Mammary epithelial cell (primary cell): ENCODE measurements at regions of chr2 and their contacts with region 1.

Region 1: DNA sequence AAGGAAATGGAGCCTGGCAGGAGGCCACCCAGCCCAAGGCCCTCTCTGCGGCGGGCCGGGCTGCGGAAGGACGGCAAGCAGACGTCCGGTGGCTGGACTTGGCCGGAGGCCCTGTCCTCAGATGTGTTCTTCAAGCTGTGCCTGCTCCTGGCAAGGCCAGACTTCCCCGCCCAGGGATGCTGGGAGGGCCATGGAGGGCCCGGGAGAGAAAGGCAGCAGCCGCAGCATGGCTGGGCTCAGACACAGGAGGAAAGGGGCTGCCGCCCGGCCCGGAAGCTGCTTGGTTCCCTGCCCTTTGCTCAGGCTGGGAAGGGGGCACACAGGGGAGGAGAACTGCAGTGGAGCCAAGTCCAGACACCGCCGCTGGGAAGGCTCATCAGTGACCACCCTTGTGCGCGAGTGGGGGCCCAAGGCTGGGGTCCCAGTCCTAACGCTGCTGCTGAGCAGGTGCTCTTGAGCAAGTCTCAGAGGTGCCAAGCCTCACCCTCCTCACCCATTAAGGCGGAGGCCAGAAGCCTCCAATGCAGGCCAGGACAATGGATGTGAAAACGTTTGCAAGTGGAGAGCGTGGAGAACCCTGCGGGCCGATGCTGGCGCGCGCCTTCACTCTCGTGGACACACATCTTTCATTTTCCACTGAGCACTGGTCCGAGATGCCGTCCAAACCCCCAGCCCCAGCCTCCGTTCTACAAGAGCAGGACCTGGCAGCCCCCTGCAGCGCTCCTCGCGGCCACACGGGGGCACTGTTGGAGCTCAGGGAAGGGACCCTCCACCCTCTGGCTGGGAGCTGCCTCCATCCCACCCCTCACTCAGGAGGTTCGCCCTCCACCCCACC is 7.9 kb downstream of the CROCC2 start:
- DNase-seq: no peak
- H3K4me3 ChIP-seq: no peak overlapping the region
- H3K27ac ChIP-seq: no peak overlapping the region
- H3K4me1 ChIP-seq: peaks cover 27% of the 10 kb centered on the region
- H3K27me3 ChIP-seq: peaks cover 7% of the 10 kb centered on the region
- CTCF ChIP-seq: peak; percentile 65 to 91

Region 2: DNA sequence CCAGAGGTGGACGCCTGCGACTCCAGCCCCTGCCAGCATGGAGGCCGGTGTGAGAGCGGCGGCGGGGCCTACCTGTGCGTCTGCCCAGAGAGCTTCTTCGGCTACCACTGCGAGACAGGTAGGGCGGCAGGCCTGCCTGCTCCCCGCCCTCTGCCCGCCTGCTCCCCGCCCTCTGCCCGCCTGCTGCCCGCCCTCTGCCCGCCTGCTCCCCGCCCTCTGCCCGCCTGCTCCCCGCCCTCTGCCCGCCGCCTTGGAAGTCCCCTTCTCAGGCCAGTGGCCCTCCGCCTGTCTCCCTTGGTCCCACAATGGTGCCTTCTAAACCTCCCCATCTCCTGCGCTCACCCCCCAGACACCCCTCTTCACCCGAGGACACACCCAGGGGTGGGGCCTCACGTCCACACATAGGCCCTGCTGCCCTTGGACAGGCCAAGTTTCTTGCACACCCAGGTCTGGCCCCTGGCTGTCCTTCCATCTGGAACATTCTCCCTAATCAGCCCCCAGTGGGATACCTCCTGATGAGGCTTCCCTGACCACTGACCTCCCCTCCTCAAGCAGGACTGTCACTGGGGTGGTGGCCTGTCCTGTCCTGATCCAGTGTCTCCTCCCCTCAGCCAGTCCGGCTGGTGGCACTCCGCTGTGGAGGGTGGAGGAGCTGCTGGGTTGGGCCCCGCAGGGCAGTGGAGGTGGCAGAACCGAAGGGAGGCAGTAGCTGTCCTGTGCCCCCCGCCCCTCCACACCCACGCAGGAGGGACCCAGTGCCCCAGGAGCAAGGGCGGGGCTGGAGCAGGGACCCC is 150.2 kb after region 1 on chr2:
- CTCF ChIA-PET with region 1: no interaction called
- dilution Hi-C with region 1: no loop called
- in situ Hi-C with region 1: no loop called
- intact Hi-C with region 1: loop called (anchors 5 kb)
- DNase-seq: peak; percentile 56
- H3K4me3 ChIP-seq: peak overlapping the region in 2 of 3 experiments; percentile 16 to 53
- H3K27ac ChIP-seq: no peak overlapping the region
- H3K4me1 ChIP-seq: peaks cover 24% of the 10 kb centered on the region
- H3K27me3 ChIP-seq: peaks cover 4% of the 10 kb centered on the region
- CTCF ChIP-seq: no peak